ENCODE measurements at regions of chr2 and their contacts with region 1.

Region 1: DNA sequence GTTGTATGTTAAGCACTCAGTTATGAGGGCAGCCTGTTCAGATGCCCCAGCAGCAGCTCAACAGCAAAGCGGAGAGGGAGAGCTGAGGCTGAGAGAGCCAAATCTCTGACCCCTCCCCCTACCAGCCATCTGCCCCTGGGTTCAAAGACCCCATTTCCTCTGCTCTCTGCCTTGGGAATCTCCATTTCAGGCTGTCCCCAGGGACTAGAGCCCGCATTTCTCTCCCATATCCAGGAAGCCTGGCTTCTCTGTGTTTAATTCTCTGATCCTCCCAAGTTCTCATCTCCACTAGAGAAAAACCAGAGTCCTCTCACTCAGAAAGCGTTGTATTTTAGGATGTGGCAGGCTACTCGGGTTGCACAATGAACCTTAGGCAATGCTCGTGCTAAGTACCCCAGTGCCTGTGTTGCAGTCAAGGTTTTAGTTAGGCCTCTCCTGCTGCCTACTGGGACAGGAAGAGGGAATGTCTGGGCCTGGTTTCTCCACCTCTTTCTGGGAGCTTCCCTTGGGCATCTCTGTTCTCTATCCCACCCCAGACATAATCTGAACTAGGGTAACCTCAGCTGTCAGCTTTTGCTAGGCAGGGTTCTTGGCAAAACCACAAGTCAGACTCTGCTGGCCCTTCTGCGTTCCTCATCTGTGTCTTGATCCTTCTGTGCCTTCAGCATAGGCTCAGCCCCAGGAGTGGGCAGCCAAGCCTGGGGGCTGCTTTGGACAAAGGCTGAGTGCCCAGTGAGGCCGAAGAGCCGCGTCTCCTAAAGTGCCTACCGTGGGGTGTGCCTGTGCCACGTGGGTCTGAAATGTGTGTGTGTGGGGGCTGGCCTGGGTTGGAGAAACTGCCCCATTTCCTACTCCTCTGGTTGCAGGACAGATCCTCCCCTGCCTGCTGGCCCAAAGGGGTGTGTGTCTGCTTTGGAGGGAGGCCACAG is 96.8 kb downstream of the STPG4 start:
- DNase-seq: no peak
- H3K4me3 ChIP-seq: no peak overlapping the region
- H3K27ac ChIP-seq: peak overlapping the region; percentile 99 to 100
- H3K4me1 ChIP-seq: peaks cover 38 to 81% of the 10 kb centered on the region in 2 experiments
- H3K27me3 ChIP-seq: no peaks in the 10 kb centered on the region
- CTCF ChIP-seq: no peak
- EP300 ChIP-seq: no peak
- RAD21 ChIP-seq: no peak

Region 2: GRCh38 chr2:46988733-46989481 is 69.4 kb before region 1 on chr2:
- CTCF ChIA-PET with region 1: interaction called, 11 read pairs
- POLR2A ChIA-PET with region 1: interaction called, 16 read pairs
- DNase-seq: peak; percentile 74
- H3K4me3 ChIP-seq: no peak overlapping the region
- H3K27ac ChIP-seq: peak overlapping the region in 1 of 2 experiments; percentile 93; a peak in 2 of 4 replicates
- H3K4me1 ChIP-seq: peaks cover 34 to 71% of the 10 kb centered on the region in 2 experiments
- H3K27me3 ChIP-seq: no peaks in the 10 kb centered on the region
- CTCF ChIP-seq: peak; percentile 26
- EP300 ChIP-seq: no peak
- RAD21 ChIP-seq: peak; percentile 39

Region 3: DNA sequence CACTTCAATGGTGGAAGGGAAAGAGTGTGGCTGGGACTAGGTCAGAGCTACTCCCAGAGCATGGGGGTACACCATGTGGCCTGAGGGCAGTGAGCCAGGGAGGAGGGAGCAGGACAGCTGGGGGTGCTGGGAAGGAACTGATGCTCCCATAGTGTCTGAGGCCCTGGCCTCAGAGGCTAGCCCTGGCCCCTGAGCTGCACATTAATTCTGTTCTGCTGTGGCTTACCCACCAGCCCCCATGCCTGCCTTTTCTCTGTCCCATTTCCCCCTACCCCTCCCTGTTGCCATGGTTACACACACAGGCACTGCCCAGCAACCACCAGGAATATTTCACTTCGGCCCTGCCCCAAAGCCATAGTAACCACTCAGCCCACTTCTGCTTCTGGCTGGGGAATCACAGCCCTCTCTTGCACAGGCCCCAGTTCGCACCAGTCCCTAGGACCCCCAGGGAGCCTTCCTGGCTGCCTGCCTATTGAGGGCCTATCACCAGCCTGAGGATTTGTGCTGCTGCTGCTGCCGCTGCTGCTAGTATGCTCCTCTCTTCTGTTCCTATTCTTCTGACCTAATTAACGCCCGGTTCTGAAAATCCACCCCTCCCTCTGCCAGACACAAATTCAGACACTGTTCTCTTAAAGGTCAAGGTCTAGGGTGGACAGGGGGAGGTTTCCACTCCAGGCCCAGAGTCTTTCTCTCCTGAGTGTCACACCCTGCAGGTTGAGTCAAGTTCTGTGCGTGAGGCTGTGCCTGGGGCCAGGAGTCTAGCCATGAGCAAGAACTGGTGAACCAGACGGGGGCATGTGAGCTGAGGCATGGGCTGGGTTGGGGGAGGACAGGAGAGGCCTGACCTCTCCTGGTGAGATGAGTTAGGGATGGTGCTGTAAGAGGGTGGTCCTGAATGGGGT is 55.5 kb before region 1 on chr2:
- CTCF ChIA-PET with region 1: interaction called, 5 read pairs
- POLR2A ChIA-PET with region 1: interaction called, 19 read pairs
- DNase-seq: peak; percentile 90
- H3K4me3 ChIP-seq: no peak overlapping the region
- H3K27ac ChIP-seq: peak overlapping the region; percentile 37 to 99; a peak in 3 of 4 replicates
- H3K4me1 ChIP-seq: peaks cover 9 to 87% of the 10 kb centered on the region in 2 experiments
- H3K27me3 ChIP-seq: no peaks in the 10 kb centered on the region
- CTCF ChIP-seq: no peak
- EP300 ChIP-seq: peak in 1 of 2 experiments; percentile 27; a peak in 1 of 4 replicates
- RAD21 ChIP-seq: no peak

Region 4: DNA sequence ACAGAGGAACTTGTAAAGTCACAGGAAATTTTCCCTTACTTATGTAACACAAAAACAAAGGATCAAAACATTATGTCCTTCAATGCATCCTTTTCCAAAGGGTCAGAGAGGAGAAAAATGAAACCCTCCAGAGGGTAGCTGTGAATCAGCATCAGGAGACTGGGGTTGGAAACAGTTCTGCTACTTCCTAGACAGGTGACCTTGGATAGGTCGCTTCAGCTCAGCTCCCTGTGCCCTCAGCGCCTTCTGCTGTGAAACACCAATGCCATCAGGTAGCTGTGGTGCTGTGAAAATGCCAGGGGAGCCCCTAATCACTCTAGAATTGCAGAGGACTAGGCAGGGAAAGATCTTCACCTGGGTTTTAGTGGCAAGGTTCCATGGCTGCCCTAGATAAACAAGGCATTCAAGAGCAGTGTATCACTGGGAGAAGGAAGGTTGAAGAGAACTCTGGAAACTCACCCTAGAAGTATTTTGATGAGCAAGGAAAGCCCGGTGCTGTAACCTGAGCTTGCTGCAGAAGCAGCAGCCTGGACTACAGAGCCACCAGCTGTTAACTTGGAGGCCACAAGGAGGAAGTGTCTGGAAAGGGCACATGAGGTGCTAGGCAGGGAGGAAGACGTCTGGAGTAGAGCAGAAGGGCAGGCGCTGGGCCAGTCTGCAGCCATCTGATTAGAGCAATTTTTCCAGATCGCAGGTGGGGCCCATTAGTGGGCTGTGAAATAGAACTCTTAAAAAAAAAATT is 41.9 kb before region 1 on chr2:
- CTCF ChIA-PET with region 1: interaction called, 10 read pairs
- POLR2A ChIA-PET with region 1: interaction called, 4 read pairs
- DNase-seq: no peak
- H3K4me3 ChIP-seq: no peak overlapping the region
- H3K27ac ChIP-seq: peak overlapping the region; percentile 84 to 86
- H3K4me1 ChIP-seq: peaks cover 21 to 56% of the 10 kb centered on the region in 2 experiments
- H3K27me3 ChIP-seq: no peaks in the 10 kb centered on the region
- CTCF ChIP-seq: peak; percentile 50
- EP300 ChIP-seq: peak in 1 of 2 experiments; percentile 85; a peak in 2 of 4 replicates
- RAD21 ChIP-seq: peak; percentile 27

Region 5: GRCh38 chr2:47043142-47043890 is 15.0 kb before region 1 on chr2:
- CTCF ChIA-PET with region 1: interaction called, 10 read pairs
- POLR2A ChIA-PET with region 1: interaction called, 49 read pairs
- DNase-seq: peak; percentile 82
- H3K4me3 ChIP-seq: peak overlapping the region; percentile 37 to 43; a peak in 3 of 4 replicates
- H3K27ac ChIP-seq: peak overlapping the region; percentile 96 to 99
- H3K4me1 ChIP-seq: peaks cover 37 to 76% of the 10 kb centered on the region in 2 experiments
- H3K27me3 ChIP-seq: no peaks in the 10 kb centered on the region
- CTCF ChIP-seq: peak; percentile 20
- EP300 ChIP-seq: peak; percentile 67 to 95
- RAD21 ChIP-seq: peak; percentile 48

Region 6: DNA sequence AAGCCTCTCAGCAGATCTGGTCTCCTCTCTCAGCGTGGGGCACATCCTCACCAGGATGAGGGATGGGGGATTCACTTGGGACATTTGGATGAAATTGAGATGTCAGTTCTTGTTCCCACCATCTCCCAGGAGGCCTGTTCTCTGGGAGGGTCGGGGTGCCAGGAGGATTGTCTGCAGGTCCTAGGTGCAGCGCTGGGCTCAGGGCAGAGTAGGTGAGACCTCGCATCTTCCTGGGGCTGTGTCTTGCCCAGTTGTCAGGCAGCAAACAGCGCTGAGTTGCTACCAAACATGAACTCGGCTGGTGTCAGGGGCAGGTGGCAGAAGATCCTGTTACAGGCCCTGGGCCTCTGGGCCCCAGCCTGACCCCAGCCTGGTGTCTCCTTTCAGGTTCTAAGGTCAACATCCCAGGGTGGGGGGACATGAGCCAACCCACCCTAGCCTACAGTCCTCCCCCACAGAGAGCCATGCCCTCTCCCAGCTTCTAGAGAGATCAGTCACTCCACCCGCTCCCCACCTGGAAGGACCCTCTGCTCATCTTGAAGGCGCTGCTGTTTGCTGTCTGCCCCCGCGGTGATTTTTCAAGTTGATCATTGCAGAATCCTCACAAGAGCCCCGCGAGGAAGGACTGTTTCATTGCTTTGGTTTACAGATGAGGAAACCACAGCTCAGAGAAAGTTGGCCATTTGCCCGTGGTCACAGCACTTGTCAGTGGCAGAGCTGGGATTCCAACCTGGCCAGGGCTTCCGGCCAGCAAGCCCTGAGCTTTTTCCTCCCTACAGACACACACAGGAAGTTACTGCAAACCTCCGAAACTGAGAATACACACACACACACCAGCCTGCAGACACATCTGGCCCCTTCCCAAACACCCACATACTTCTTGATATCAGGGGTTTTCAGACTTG is 12.9 kb after region 1 on chr2:
- CTCF ChIA-PET with region 1: interaction called, 15 read pairs
- POLR2A ChIA-PET with region 1: interaction called, 27 read pairs
- DNase-seq: no peak
- H3K4me3 ChIP-seq: no peak overlapping the region
- H3K27ac ChIP-seq: peak overlapping the region; percentile 97 to 98
- H3K4me1 ChIP-seq: peaks cover 67 to 93% of the 10 kb centered on the region in 2 experiments
- H3K27me3 ChIP-seq: no peaks in the 10 kb centered on the region
- CTCF ChIP-seq: no peak
- EP300 ChIP-seq: peak in 1 of 2 experiments; percentile 37; a peak in 1 of 4 replicates
- RAD21 ChIP-seq: no peak